ENCODE measurements at regions of chr13 and their contacts with region 1.

Region 1: GRCh38 chr13:53010374-53011105 is 18.1 kb upstream of the OLFM4 start:
- DNase-seq: no peak
- H3K4me3 ChIP-seq: no peak overlapping the region
- H3K27ac ChIP-seq: no peak overlapping the region
- H3K4me1 ChIP-seq: no peaks in the 10 kb centered on the region
- CTCF ChIP-seq: no peak

Region 2: DNA sequence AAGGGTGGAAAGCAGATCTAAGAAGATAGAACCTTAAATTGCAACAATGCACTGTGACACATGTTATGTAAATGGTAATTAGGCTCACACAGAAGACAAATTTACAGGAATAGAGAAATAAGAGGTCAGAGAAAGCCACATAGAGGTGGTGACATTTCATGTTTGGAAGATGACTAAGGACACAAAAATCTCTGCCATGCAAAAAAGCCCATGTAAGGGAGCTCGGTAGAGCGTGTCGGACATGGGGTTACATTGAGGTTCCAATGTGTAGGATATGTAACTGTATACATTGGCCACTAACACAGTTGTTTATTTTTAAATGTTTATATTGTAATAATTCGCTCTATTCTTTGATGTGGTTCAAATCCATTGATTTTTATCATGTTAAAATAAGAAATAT is 324.2 kb before region 1 on chr13:
- CTCF ChIA-PET with region 1: no interaction called
- POLR2A ChIA-PET with region 1: interaction called, 10 read pairs
- intact Hi-C with region 1: no loop called
- DNase-seq: no peak
- H3K4me3 ChIP-seq: no peak overlapping the region
- H3K27ac ChIP-seq: no peak overlapping the region
- H3K4me1 ChIP-seq: no peaks in the 10 kb centered on the region
- CTCF ChIP-seq: no peak

Region 3: DNA sequence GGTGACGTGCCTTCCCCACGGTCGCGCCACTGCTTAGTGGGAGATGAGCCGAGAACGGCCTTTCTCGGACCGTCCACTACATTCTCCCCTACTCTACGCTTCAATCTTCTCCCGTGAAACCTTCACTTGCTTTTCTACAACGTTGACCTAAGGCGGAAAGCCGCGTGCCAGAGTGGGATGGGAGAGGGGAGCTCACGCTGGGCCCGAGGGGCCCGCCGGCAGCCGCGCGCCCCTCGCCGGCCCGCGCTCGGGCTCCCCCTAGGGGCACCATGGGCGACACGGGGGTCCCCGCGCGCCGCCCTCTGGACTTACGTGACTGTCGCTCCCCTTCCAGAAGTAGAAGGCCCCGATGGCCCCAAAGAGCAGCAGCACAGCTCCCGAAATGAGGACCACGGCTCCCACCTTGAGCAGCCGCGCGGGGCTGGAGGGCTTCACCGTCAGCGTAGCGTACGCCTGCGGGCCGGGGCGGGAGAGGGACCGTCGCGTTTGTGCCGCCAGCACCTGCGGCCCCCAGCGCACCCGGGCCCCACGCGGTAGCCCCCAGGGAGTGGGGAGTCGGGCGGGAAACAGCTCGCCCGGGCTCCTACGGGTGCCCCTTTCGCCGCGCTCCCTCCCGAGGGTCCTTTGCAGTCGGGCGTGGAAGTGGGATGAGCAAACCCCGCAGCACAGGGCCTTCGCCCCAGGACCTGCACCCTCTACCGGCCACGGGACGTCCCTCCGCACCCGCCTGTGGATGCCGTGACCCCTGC is 271.6 kb before region 1 on chr13:
- CTCF ChIA-PET with region 1: no interaction called
- POLR2A ChIA-PET with region 1: no interaction called
- intact Hi-C with region 1: no loop called
- DNase-seq: no peak
- H3K4me3 ChIP-seq: no peak overlapping the region
- H3K27ac ChIP-seq: no peak overlapping the region
- H3K4me1 ChIP-seq: no peaks in the 10 kb centered on the region
- CTCF ChIP-seq: no peak

Region 4: DNA sequence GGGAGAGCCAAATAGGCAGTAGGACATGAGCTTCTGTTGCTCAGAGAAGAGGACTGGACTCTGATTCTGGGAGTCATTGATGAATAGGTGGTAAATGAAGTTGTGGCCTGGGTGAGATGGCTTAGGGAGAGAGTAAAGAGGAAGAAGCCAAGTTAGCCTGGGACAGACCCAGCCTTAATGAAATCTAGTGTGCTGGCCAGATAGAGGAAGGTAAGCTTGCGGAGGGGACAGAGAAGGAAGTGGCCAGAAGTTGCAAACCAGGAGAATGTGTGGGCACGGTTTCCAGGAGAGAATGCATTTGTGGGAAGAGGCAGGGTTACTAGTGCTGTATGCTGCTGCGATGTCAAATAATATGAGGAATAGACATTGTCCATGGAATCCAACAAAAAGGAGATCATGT is 65.2 kb before region 1 on chr13:
- CTCF ChIA-PET with region 1: no interaction called
- POLR2A ChIA-PET with region 1: interaction called, 10 read pairs
- intact Hi-C with region 1: no loop called
- DNase-seq: no peak
- H3K4me3 ChIP-seq: no peak overlapping the region
- H3K27ac ChIP-seq: no peak overlapping the region
- H3K4me1 ChIP-seq: no peaks in the 10 kb centered on the region
- CTCF ChIP-seq: no peak

Region 5: GRCh38 chr13:53311561-53311960 is 301.0 kb after region 1 on chr13:
- CTCF ChIA-PET with region 1: no interaction called
- POLR2A ChIA-PET with region 1: no interaction called
- intact Hi-C with region 1: no loop called
- DNase-seq: no peak
- H3K4me3 ChIP-seq: no peak overlapping the region
- H3K27ac ChIP-seq: no peak overlapping the region
- H3K4me1 ChIP-seq: no peaks in the 10 kb centered on the region
- CTCF ChIP-seq: no peak